Endothelial cell of umbilical vein (primary cell): ENCODE measurements at regions of chr16 and their contacts with region 1.

Region 1: GRCh38 chr16:84084570-84085270 is 32.0 kb downstream of the MBTPS1 start:
- DNase-seq: peak; percentile 66
- H3K4me3 ChIP-seq: no peak overlapping the region
- H3K27ac ChIP-seq: no peak overlapping the region
- H3K4me1 ChIP-seq: no peaks in the 10 kb centered on the region
- H3K27me3 ChIP-seq: no peaks in the 10 kb centered on the region
- CTCF ChIP-seq: peak; percentile 71 to 87
- POLR2A ChIP-seq: no peak

Region 2: GRCh38 chr16:83842756-83843507 is 241.8 kb before region 1 on chr16:
- CTCF ChIA-PET with region 1: no interaction called
- POLR2A ChIA-PET with region 1: no interaction called
- dilution Hi-C with region 1: no loop called
- intact Hi-C with region 1: no loop called
- DNase-seq: no peak
- H3K4me3 ChIP-seq: no peak overlapping the region
- H3K27ac ChIP-seq: no peak overlapping the region
- H3K4me1 ChIP-seq: peaks cover 3% of the 10 kb centered on the region
- H3K27me3 ChIP-seq: no peaks in the 10 kb centered on the region
- CTCF ChIP-seq: no peak
- POLR2A ChIP-seq: no peak

Region 3: DNA sequence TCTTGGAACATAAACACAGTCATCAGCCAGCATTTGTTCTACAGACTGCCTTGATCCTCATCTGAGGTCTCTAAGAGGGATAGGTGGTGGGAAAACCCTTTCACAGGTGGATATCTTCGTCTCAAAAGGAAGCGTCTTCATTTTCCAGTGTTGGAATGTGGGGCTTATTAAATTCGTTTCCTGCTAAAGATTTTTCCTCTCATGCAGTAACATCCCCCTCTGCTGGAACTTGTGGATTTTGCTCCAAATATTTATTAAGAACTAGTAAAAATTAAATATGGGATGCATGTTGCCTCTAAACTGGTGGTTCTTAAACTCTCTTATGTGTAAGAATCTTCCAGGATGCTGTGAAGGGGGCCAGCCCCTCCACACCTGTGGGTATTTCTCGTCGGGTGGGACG is 205.9 kb before region 1 on chr16:
- CTCF ChIA-PET with region 1: no interaction called
- POLR2A ChIA-PET with region 1: no interaction called
- dilution Hi-C with region 1: no loop called
- intact Hi-C with region 1: no loop called
- DNase-seq: peak; percentile 70
- H3K4me3 ChIP-seq: no peak overlapping the region
- H3K27ac ChIP-seq: no peak overlapping the region
- H3K4me1 ChIP-seq: no peaks in the 10 kb centered on the region
- H3K27me3 ChIP-seq: peaks cover 13 to 20% of the 10 kb centered on the region in 2 experiments
- CTCF ChIP-seq: peak; percentile 22 to 38
- POLR2A ChIP-seq: no peak

Region 4: GRCh38 chr16:84098936-84099335 is 14.2 kb after region 1 on chr16:
- CTCF ChIA-PET with region 1: interaction called, 11 read pairs
- POLR2A ChIA-PET with region 1: no interaction called
- dilution Hi-C with region 1: no loop called
- intact Hi-C with region 1: no loop called
- DNase-seq: no peak
- H3K4me3 ChIP-seq: no peak overlapping the region
- H3K27ac ChIP-seq: no peak overlapping the region
- H3K4me1 ChIP-seq: peaks cover 5% of the 10 kb centered on the region
- H3K27me3 ChIP-seq: no peaks in the 10 kb centered on the region
- CTCF ChIP-seq: no peak
- POLR2A ChIP-seq: no peak

Region 5: DNA sequence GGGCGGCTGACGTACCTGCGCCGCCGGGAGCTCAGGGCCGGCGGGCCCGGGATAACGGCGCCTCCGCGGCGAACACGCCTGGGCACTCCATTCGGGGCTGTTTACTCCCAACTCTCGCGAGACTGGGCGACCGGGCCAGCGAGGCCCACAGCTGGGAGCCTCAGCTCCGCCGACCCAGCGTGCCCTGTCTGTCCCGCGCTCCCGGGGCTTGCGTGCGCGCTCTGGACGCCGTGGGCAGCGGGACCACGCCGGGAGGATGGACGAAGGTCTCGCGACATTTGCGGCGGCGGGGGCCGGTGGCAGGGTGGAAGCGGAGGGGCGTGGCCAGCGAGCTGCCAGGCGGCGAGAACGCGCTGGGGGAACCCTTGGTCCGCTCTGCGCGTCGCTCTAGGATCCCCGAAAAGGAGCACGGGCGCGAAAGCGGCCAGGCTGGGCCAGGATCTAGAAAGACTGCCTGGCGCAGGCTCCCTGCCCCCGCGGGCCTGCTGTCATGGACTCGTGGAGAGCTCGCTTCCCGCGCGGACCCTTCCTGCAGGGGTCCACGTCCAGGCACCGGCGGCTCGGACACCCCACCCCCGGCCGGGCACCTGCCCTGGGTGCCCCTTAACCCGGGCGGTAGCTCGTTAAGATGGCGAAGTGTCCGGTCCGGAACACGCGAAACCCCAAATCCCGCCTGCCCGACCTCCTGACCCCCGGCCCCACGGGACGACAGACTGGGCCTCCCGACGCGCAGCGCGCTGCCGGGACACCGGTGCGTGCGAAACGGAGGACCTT is 32.2 kb after region 1 on chr16 and contains the start of gene MBTPS1:
- CTCF ChIA-PET with region 1: interaction called, 15 read pairs
- POLR2A ChIA-PET with region 1: no interaction called
- dilution Hi-C with region 1: no loop called
- intact Hi-C with region 1: no loop called
- DNase-seq: peak; percentile 98
- H3K4me3 ChIP-seq: peak within 1 kb of the TSS; percentile 70 to 96 (median 88)
- H3K27ac ChIP-seq: peak within 1 kb of the TSS; percentile 69
- H3K4me1 ChIP-seq: peaks cover 10% of the 10 kb centered on the region
- H3K27me3 ChIP-seq: no peaks in the 10 kb centered on the region
- CTCF ChIP-seq: no peak
- POLR2A ChIP-seq: peak; percentile 69
- total RNA-seq, gene MBTPS1: 93.0 and 99.6 TPM in 2 replicates